GM10248 (cell line): ENCODE measurements at regions of chr10 and their contacts with region 1.

Region 1: GRCh38 chr10:99395750-99396445 is 34.5 kb downstream of the GOT1 start:
- DNase-seq: no peak
- CTCF ChIP-seq: no peak

Region 2: DNA sequence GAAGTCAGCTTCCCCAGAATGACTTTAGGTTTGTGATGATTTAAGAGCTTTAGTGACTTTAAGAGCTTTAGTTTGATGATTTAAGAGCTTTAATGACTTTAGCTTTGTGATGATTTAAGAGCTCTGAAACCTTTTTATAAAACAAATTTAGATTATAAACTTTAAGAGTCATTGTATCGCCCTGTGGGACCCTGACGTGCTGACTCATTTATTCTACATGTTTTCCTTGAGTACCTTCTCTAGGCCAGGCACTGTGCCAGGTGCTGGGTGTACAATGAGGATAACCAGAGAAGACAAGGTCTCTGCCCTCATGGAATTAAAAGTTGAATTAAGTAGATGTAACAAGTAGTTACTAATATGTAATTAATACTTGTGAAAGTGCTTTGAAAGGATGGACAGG is 21.4 kb before region 1 on chr10:
- CTCF ChIA-PET with region 1: interaction called, 29 read pairs
- POLR2A ChIA-PET with region 1: no interaction called
- DNase-seq: no peak
- CTCF ChIP-seq: no peak

Region 3: DNA sequence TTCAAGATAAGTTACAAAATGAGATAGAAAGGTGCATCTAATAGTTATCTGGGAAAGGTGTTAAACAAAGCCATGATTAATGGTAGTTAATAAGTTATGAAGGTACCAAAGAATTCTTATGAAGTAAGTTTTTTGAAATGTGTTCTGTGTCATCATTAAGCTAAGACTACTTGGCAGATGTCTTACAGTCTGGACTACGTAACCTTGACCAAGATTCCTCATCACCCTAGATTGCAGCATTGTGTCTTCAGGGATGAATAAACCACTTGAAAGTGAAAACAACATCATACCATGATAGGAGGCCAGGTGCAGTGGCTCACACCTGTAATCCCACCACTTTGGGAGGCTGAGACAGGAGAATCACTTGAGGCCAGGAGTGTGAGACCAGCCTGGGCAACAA is 13.7 kb before region 1 on chr10:
- CTCF ChIA-PET with region 1: interaction called, 29 read pairs
- POLR2A ChIA-PET with region 1: no interaction called
- DNase-seq: no peak
- CTCF ChIP-seq: no peak

Region 4: DNA sequence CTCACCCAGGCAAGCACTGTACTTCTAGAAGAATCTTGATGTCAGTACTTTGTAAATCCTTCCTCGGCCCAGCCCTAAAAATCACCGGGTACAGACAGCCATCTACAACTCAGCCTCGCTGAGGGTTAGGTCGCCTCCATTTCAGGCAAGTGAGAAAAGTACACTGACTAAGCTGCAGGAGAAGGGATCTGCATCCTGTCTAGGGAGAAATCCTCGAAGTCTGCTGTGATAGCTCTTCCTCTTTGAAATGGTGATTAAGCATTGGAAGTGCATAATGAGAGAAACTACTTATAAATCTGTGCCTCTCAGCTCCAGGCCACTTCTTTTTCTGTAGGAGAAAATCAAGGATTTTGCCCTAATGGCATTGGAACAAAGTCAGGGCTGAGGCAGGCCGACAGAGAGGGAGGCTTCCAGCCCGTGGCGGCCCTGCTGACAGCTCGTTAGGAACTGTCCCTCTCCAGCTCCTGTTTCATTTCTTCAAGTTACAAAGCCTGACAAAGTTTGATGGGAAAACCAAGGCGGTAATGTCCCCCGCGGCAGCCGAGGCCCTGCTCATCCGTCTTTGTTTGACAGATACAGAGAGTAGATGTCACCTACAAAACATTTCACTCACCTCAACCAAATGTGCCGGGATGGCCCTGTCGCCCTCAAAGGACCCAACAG is 48.6 kb after region 1 on chr10:
- CTCF ChIA-PET with region 1: no interaction called
- POLR2A ChIA-PET with region 1: no interaction called
- DNase-seq: no peak
- CTCF ChIP-seq: no peak